ENCODE measurements at regions of chr11 and their contacts with region 1.

Region 1: GRCh38 chr11:82229341-82229740 is 504.3 kb downstream of the FAM181B start:
- DNase-seq: peak; percentile 2
- H3K4me3 ChIP-seq: no peak overlapping the region
- H3K27ac ChIP-seq: no peak overlapping the region
- H3K4me1 ChIP-seq: no peaks in the 10 kb centered on the region
- H3K27me3 ChIP-seq: no peaks in the 10 kb centered on the region
- CTCF ChIP-seq: peak; percentile 37 to 56

Region 2: DNA sequence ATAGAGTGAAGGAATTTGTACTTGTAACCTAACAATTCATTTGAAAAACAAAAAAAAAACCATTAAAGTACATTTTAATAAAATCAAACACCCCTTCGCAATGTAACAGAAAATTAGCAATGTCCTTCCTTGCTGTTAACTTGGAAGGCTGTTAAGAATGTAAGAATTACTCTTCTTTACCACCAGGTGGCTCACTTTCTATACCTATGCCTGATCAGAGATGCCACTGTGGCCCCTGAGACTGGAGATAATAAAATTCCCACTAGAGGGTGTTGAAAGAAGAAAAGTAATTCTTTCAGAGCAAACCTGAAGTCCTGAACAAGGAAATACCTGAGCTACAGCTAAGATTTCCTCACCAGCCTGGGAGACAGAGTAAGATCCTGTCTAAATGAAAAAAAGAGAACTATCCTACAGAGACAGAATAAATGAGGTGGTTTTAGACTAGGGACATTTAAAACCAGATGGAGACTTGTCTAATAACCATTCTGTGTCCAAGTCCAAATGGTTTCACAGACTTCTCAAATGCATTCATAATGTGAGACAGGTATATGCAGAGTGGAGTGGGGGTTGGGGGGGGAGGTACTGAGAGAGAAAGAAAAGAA is 585.0 kb before region 1 on chr11:
- CTCF ChIA-PET with region 1: no interaction called
- dilution Hi-C with region 1: no loop called
- in situ Hi-C with region 1: loop called (anchors 10 to 25 kb)
- intact Hi-C with region 1: loop called (anchors 1 kb)
- DNase-seq: peak; percentile 51
- H3K4me3 ChIP-seq: no peak overlapping the region
- H3K27ac ChIP-seq: no peak overlapping the region
- H3K4me1 ChIP-seq: no peaks in the 10 kb centered on the region
- H3K27me3 ChIP-seq: peaks cover 5% of the 10 kb centered on the region
- CTCF ChIP-seq: peak; percentile 63 to 65

Region 3: GRCh38 chr11:82384308-82384707 is 155.0 kb after region 1 on chr11:
- CTCF ChIA-PET with region 1: no interaction called
- dilution Hi-C with region 1: no loop called
- in situ Hi-C with region 1: no loop called
- intact Hi-C with region 1: no loop called
- DNase-seq: no peak
- H3K4me3 ChIP-seq: no peak overlapping the region
- H3K27ac ChIP-seq: no peak overlapping the region
- H3K4me1 ChIP-seq: no peaks in the 10 kb centered on the region
- H3K27me3 ChIP-seq: peaks cover 4% of the 10 kb centered on the region
- CTCF ChIP-seq: no peak

Measured in mammary epithelial cell (primary cell).